Endothelial cell of umbilical vein (primary cell): ENCODE measurements at regions of chr3 and their contacts with region 1.

Region 1: DNA sequence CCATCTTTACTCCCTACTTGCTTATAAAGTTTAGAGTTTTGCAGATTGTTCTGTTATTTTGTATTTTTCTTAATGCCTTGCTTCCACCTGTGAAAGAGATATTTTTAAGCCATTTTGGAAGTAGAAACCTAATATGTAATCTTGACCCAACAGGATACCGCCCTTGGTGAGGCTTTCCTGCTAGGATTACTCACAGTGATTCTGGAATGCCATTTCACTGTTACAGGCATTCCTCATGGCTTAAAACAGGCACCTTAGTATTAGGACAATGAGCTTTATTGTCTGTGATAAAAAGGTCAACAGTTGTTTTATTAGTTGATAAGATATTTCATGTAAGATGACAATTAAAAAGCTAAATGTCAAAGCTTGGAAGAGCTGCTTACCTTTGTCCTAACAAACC is 58.2 kb downstream of the PHLDB2 start:
- DNase-seq: peak; percentile 88
- H3K4me3 ChIP-seq: peak overlapping the region in 1 of 3 experiments; percentile 17
- H3K27ac ChIP-seq: peak overlapping the region; percentile 91
- H3K4me1 ChIP-seq: peaks cover 35% of the 10 kb centered on the region
- H3K27me3 ChIP-seq: no peaks in the 10 kb centered on the region
- CTCF ChIP-seq: no peak
- POLR2A ChIP-seq: peak; percentile 25

Region 2: GRCh38 chr3:111851511-111851954 is 65.8 kb before region 1 on chr3:
- CTCF ChIA-PET with region 1: no interaction called
- POLR2A ChIA-PET with region 1: no interaction called
- dilution Hi-C with region 1: no loop called
- intact Hi-C with region 1: loop called (anchors 1 kb)
- DNase-seq: peak; percentile 93
- H3K4me3 ChIP-seq: peak overlapping the region in 1 of 3 experiments; percentile 16
- H3K27ac ChIP-seq: peak overlapping the region; percentile 90
- H3K4me1 ChIP-seq: peaks cover 50% of the 10 kb centered on the region
- H3K27me3 ChIP-seq: no peaks in the 10 kb centered on the region
- CTCF ChIP-seq: no peak
- POLR2A ChIP-seq: peak; percentile 83

Region 3: DNA sequence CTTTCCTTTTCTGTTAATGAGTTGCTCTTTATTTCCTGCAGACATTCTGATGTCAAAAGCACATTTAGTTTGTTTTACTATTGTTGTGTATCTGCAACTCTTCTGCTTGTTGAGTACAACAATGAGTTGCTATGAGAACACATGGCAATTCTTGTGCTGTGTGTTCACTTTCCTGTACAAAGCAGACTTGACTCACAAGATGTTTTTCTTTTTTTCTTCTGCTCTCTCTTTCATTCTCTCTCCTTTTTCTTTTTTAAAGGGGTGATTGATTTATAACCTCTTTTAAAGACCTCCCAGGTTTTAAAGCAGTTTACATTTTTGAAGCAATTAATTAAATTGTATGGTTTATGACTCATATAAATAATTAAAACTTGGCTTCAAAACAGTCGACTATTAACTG is 29.9 kb after region 1 on chr3:
- CTCF ChIA-PET with region 1: no interaction called
- POLR2A ChIA-PET with region 1: no interaction called
- dilution Hi-C with region 1: no loop called
- intact Hi-C with region 1: loop called (anchors 1 kb)
- DNase-seq: peak; percentile 89
- H3K4me3 ChIP-seq: no peak overlapping the region
- H3K27ac ChIP-seq: peak overlapping the region; percentile 79
- H3K4me1 ChIP-seq: peaks cover 24% of the 10 kb centered on the region
- H3K27me3 ChIP-seq: no peaks in the 10 kb centered on the region
- CTCF ChIP-seq: no peak
- POLR2A ChIP-seq: no peak

Region 4: GRCh38 chr3:111956995-111957734 is 39.9 kb after region 1 on chr3:
- CTCF ChIA-PET with region 1: interaction called, 6 read pairs
- POLR2A ChIA-PET with region 1: interaction called, 5 read pairs
- dilution Hi-C with region 1: no loop called
- intact Hi-C with region 1: loop called (anchors 1 kb)
- DNase-seq: peak; percentile 91
- H3K4me3 ChIP-seq: no peak overlapping the region
- H3K27ac ChIP-seq: peak overlapping the region; percentile 57
- H3K4me1 ChIP-seq: peaks cover 28% of the 10 kb centered on the region
- H3K27me3 ChIP-seq: no peaks in the 10 kb centered on the region
- CTCF ChIP-seq: no peak
- POLR2A ChIP-seq: no peak

Region 5: GRCh38 chr3:112032098-112032731 is 114.9 kb after region 1 on chr3:
- CTCF ChIA-PET with region 1: no interaction called
- POLR2A ChIA-PET with region 1: no interaction called
- dilution Hi-C with region 1: no loop called
- intact Hi-C with region 1: no loop called
- DNase-seq: no peak
- H3K4me3 ChIP-seq: no peak overlapping the region
- H3K27ac ChIP-seq: no peak overlapping the region
- H3K4me1 ChIP-seq: no peaks in the 10 kb centered on the region
- H3K27me3 ChIP-seq: peaks cover 0 to 2% of the 10 kb centered on the region in 2 experiments
- CTCF ChIP-seq: no peak
- POLR2A ChIP-seq: no peak